T-cell (primary cell): ENCODE measurements at regions of chr2 and their contacts with region 1.

Region 1: GRCh38 chr2:69565431-69565839 is 78.1 kb downstream of the AAK1 start:
- DNase-seq: peak; percentile 32 to 81 (median 61)
- ATAC-seq: peak; percentile 64 to 75 (median 69)
- H3K4me3 ChIP-seq: no peak overlapping the region
- H3K4me3 Mint-ChIP-seq: peak overlapping the region in 2 of 3 donors; percentile 35 to 65
- H3K27ac ChIP-seq: no peak overlapping the region
- H3K27ac Mint-ChIP-seq: peak overlapping the region; percentile 74 to 83
- H3K4me1 ChIP-seq: peaks cover 45 to 49% of the 10 kb centered on the region in 2 experiments
- H3K4me1 Mint-ChIP-seq: peaks cover 96 to 98% (median 97%) of the 10 kb centered on the region in 3 donors
- H3K27me3 ChIP-seq: no peaks in the 10 kb centered on the region
- H3K27me3 Mint-ChIP-seq: no peaks in the 10 kb centered on the region

Region 2: DNA sequence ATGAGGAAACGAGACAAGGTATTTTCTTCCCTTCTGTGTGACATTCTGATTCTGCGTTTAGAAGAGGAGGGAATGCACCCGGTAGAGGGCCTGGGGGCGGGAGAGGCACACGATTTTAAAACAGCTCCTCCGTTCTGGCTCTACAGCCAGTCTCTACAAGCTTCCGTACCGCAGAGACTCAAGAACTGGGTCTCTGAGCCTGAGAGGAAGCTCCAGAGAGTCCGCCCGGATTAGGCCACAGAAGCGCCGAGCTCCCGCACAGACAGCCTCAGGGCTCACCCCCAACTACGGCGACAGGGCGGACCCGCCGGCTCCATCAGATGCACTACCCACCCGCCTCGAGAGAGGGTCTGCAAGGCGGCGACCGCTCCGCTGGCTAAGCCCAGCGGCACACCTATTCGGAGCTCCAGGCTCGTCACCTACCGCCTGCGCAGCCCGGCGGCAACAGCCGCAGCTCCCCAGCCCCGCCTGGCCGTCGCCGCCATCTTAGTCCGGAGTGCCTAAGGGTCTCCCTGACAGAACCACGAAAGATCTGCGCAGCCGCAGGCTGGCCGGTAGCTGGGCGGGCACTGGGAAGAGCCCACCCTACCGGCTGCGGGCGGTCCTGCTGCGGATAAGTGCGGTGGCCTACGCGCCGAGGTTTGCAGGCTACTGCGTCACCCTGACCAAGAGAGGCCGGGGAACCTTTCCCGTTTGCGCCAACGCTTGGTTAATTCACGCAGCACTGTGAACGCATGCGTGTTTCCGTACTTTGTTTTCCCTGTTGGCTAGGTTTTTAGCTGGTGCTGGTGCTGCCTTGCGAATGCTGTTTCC is 128.3 kb before region 1 on chr2 and contains the start of gene NFU1:
- CTCF ChIA-PET with region 1: interaction called in 1 of 2 experiments, 12 read pairs
- POLR2A ChIA-PET with region 1: no interaction called
- DNase-seq: peak; percentile 68 to 94 (median 86)
- ATAC-seq: peak; percentile 82 to 86 (median 84)
- H3K4me3 ChIP-seq: peak within 1 kb of the TSS; percentile 79 to 83
- H3K4me3 Mint-ChIP-seq: peak within 1 kb of the TSS; percentile 83 to 97 (median 96)
- H3K27ac ChIP-seq: peak within 1 kb of the TSS; percentile 95
- H3K27ac Mint-ChIP-seq: peak within 1 kb of the TSS; percentile 98 to 99
- H3K4me1 ChIP-seq: peaks cover 11 to 28% of the 10 kb centered on the region in 2 experiments
- H3K4me1 Mint-ChIP-seq: peaks cover 41 to 44% (median 44%) of the 10 kb centered on the region in 3 donors
- H3K27me3 ChIP-seq: no peaks in the 10 kb centered on the region
- H3K27me3 Mint-ChIP-seq: no peaks in the 10 kb centered on the region
- total RNA-seq, gene NFU1: 20.6 to 31.9 (median 22.5) TPM

Region 3: GRCh38 chr2:69554981-69555380 is 10.5 kb before region 1 on chr2:
- CTCF ChIA-PET with region 1: interaction called, 9 to 15 read pairs
- POLR2A ChIA-PET with region 1: interaction called in 1 of 2 experiments, 5 read pairs
- DNase-seq: peak in 1 of 35 experiments; percentile 17
- ATAC-seq: peak; percentile 21 to 55 (median 46)
- H3K4me3 ChIP-seq: no peak overlapping the region
- H3K4me3 Mint-ChIP-seq: peak overlapping the region in 1 of 3 donors; percentile 4
- H3K27ac ChIP-seq: no peak overlapping the region
- H3K27ac Mint-ChIP-seq: peak overlapping the region; percentile 53 to 56
- H3K4me1 ChIP-seq: peaks cover 28 to 40% of the 10 kb centered on the region in 2 experiments
- H3K4me1 Mint-ChIP-seq: peaks cover 77 to 87% (median 78%) of the 10 kb centered on the region in 3 donors
- H3K27me3 ChIP-seq: no peaks in the 10 kb centered on the region
- H3K27me3 Mint-ChIP-seq: no peaks in the 10 kb centered on the region

Region 4: GRCh38 chr2:69581774-69582581 is 16.5 kb after region 1 on chr2:
- CTCF ChIA-PET with region 1: interaction called, 4 to 19 read pairs
- POLR2A ChIA-PET with region 1: interaction called in 1 of 2 experiments, 3 read pairs
- DNase-seq: peak in 5 of 35 experiments; percentile 4 to 37 (median 21)
- ATAC-seq: peak in 3 of 4 experiments; percentile 30 to 46 (median 35)
- H3K4me3 ChIP-seq: no peak overlapping the region
- H3K4me3 Mint-ChIP-seq: peak overlapping the region; percentile 38 to 72 (median 55)
- H3K27ac ChIP-seq: no peak overlapping the region
- H3K27ac Mint-ChIP-seq: peak overlapping the region; percentile 82 to 89
- H3K4me1 ChIP-seq: peaks cover 32 to 79% of the 10 kb centered on the region in 2 experiments
- H3K4me1 Mint-ChIP-seq: peaks cover 93 to 98% (median 93%) of the 10 kb centered on the region in 3 donors
- H3K27me3 ChIP-seq: no peaks in the 10 kb centered on the region
- H3K27me3 Mint-ChIP-seq: no peaks in the 10 kb centered on the region

Region 5: DNA sequence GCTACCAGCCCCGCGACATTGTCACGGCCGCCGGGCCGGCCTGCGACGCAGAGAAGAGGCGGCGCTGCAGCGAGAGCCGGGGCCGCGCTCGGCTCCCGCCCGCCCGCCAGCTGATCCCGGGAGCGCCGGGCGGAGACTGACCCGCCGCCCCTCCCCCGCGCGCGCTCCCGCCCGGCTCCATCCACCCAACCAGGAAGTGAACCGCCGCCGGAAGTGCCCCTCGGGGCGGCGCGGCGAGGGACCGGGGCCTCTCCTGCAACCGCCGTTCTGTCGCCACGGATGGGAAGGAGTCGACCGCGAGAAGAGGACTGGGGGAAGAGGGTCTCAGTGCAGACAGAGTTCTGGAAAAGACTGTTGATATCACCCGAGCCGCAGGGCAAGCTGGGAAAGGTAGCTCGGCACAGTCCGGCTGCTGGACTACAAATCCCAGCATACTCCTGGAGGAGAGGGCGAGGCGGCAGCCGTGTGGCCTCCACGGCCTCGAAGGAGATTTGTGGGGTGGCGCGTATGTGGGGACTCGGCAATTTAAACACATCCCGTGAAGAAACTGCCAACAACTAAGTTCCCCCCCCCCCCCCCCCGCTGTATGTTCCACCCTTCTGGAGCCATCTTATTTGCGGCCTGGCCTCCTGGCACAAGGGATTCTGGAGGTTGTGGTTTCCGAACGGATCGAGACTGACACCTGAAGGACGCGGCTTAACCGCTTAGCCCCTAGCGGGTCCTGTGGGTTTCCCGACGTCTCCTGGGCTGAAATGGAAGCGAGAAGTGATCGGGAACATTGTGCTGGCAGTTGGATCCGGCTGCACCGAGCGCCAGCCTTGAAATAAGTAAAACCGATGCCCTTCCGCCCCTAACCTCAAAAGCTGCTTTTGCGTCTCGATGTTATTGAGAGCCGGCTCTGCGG is 78.4 kb after region 1 on chr2 and contains the start of gene AAK1:
- CTCF ChIA-PET with region 1: interaction called, 3 to 19 read pairs
- POLR2A ChIA-PET with region 1: interaction called in 1 of 2 experiments, 3 read pairs
- DNase-seq: peak; percentile 68 to 89 (median 80)
- ATAC-seq: peak; percentile 56 to 67 (median 62)
- H3K4me3 ChIP-seq: peak within 1 kb of the TSS; percentile 77 to 98
- H3K4me3 Mint-ChIP-seq: peak within 1 kb of the TSS; percentile 92 to 96 (median 96)
- H3K27ac ChIP-seq: peak within 1 kb of the TSS; percentile 83
- H3K27ac Mint-ChIP-seq: peak within 1 kb of the TSS; percentile 96 to 97
- H3K4me1 ChIP-seq: peaks cover 51 to 55% of the 10 kb centered on the region in 2 experiments
- H3K4me1 Mint-ChIP-seq: peaks cover 59 to 70% (median 67%) of the 10 kb centered on the region in 3 donors
- H3K27me3 ChIP-seq: no peaks in the 10 kb centered on the region
- H3K27me3 Mint-ChIP-seq: no peaks in the 10 kb centered on the region
- total RNA-seq, gene AAK1: 170 to 283 (median 177) TPM

Region 6: DNA sequence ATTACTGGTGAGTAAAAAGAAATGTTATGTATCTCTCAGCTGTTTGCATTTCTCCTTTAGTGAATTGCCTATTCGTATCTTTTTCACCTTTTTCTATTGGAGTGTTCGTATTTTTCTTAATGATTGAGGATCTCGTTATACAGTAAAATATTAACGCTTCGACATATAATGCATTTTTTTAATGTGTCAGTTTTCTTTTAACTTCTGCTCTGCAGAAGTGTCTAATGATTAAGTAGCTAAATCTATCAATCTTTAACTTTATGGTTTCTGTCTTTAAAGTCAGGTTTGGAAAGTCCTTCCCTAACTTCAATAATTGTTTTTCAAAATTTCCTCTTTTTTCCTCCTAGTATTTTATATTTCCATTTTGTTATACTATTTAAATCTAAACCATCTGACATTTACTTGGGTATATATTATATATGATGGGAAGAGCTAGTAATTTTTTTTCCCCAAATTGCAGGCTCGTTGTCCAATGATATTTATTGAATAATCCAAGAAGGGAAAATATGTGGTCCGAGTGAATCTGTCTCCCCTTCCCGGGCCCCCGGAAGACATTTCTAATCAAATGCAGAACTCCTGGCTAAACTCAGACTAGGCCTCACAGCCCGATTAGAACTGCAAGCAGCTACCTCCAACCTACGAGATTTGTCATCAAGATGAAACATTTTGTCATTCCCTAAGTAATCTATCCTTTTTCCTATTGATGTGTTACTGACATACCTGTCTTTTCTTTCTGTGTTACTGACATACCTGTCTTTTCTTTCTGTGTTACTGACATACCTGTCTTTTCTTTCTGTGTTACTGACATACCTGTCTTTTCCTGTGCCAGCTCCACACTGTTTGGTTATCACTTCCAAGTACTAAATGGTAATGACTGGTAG is 539.0 kb after region 1 on chr2:
- CTCF ChIA-PET with region 1: no interaction called
- POLR2A ChIA-PET with region 1: interaction called in 1 of 2 experiments, 12 read pairs
- DNase-seq: peak in 3 of 35 experiments; percentile 24 to 49 (median 25)
- ATAC-seq: no peak
- H3K4me3 ChIP-seq: peak overlapping the region; percentile 22 to 25
- H3K4me3 Mint-ChIP-seq: peak overlapping the region; percentile 70 to 74 (median 74)
- H3K27ac ChIP-seq: peak overlapping the region; percentile 87
- H3K27ac Mint-ChIP-seq: peak overlapping the region; percentile 98 to 99
- H3K4me1 ChIP-seq: peaks cover 7 to 52% of the 10 kb centered on the region in 2 experiments
- H3K4me1 Mint-ChIP-seq: peaks cover 54 to 59% (median 54%) of the 10 kb centered on the region in 3 donors
- H3K27me3 ChIP-seq: no peaks in the 10 kb centered on the region
- H3K27me3 Mint-ChIP-seq: no peaks in the 10 kb centered on the region